ENCODE measurements at regions of chr7 and their contacts with region 1.

Region 1: GRCh38 chr7:92833024-92833765 is 3.2 kb downstream of the CDK6 start:
- DNase-seq: peak; percentile 74 to 95 (median 90)

Region 2: GRCh38 chr7:92621026-92621540 is 212.1 kb before region 1 on chr7:
- intact Hi-C with region 1: loop called (anchors 2 kb)
- DNase-seq: peak in 40 of 42 donors; percentile 21 to 90 (median 76)

Region 3: DNA sequence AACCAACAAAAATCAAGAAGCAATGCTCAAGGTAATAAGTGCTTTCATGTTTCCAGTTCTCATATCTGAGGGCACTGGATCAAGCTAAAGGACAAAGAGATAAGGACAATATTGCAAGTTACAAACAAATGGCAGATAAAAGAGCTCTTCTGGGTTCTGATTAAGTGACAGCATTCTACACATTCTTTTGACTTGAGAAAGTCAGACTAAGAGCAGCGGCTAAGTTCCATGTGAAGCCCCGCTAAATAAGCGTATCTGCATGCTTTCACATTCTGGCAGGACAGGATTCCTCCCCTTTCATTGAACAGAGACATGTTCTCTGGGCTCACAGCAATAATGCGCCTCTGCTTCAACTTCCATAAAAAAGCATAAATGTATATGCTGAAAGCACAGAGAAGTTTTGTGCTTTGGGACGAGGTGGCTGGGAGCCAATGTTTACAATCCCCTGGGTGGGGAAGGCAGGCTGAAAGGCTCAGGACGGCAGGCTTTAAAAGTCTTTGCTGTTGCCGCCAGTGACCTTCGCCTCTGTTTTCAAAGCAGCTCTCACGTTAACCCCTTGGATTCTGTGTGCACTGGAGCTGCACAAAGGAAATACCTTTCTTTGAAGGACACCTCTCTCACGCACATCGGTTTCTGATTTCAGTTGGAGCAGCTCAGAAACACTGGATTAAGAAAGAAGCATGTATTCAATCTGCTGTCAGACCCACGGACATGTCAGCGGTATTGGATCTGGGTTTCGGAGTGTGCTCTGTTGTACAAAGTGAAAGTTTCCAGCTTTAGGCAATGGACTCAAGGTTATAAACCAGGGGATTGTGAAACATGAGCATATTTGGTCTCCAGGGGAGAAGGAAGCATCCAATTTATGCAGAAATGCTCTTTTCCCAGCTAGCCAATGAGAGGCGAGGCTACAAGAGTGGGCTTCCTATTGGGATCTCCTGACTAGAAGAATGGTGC is 137.6 kb before region 1 on chr7:
- intact Hi-C with region 1: loop called (anchors 5 kb)
- DNase-seq: peak in 12 of 42 donors; percentile 6 to 63 (median 42)

Region 4: GRCh38 chr7:93055543-93056107 is 222.4 kb after region 1 on chr7:
- intact Hi-C with region 1: loop called (anchors 10 kb)
- DNase-seq: peak in 1 of 42 donors; percentile 6